HEK293T (cell line): ENCODE measurements at regions of chr9 and their contacts with region 1.

Region 1: DNA sequence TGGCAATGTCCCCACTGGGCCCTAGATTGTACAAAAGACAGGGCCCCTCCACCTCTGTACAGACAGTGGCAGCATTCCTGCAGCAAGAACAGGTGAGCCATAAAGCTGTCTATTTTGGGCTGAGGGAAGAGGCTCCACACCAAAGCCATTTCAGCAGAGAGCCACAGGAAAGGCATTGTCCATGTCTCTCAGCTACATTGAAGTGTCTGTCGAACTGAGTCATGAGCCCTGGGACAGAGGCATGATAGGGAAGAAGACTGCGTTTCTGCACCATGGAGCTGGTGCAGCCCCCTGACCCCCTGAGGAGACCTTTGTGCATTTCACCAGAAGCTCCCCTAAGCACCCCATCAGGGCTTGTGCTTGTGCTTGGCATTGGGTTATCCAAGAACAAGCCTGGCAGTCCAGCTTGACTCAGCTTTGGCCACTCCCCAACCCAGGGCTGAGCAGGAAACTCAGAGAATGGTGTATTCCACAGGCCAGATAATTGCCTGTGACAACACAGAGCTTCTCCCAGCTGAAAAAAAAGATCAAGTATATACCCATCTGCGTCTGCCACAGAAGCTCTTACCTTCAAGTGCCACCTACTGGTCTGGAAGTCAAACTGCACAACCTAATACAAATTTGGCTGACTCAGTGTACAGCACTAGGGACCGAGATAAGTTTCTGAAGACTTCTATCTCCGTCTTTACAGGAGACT is 5.9 kb upstream of the FRMD3 start:
- DNase-seq: peak; percentile 57

Region 2: GRCh38 chr9:83334320-83334719 is 209.8 kb before region 1 on chr9:
- CTCF ChIA-PET with region 1: interaction called, 10 read pairs
- POLR2A ChIA-PET with region 1: no interaction called
- DNase-seq: peak; percentile 70

Region 3: DNA sequence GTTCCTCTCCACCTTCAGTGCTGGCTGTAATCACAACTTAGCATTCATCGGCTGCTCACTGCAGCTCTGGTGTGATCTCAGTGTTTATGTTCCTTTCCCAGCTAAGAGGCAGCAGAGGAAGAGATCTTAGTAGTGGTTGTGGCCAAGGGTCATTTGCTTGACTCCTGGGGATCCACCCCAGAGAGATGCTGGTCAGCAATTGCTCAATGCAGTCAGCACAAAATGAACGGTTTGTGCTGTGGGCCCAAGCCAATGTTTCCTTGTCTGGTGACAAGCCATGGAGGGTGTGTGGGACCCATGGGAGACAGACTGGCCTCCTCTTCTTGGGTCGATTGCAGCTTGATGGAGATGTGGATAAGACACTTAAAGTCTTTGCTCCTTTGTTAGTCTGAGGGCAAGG is 10.1 kb after region 1 on chr9:
- CTCF ChIA-PET with region 1: no interaction called
- POLR2A ChIA-PET with region 1: no interaction called
- DNase-seq: no peak